CD4-positive, alpha-beta T cell (primary cell): ENCODE measurements at regions of chr4 and their contacts with region 1.

Region 1: GRCh38 chr4:99921174-99921573 is 25.2 kb downstream of the DNAJB14 start:
- DNase-seq: peak in 3 of 14 experiments; percentile 10 to 44 (median 41)
- ATAC-seq: peak; percentile 96
- H3K4me3 ChIP-seq: no peak overlapping the region
- H3K4me3 Mint-ChIP-seq: no peak overlapping the region
- H3K27ac ChIP-seq: no peak overlapping the region
- H3K27ac Mint-ChIP-seq: peak overlapping the region; percentile 59
- H3K4me1 ChIP-seq: peaks cover 1% of the 10 kb centered on the region
- H3K4me1 Mint-ChIP-seq: peaks cover 24% of the 10 kb centered on the region
- H3K27me3 ChIP-seq: no peaks in the 10 kb centered on the region
- H3K27me3 Mint-ChIP-seq: no peaks in the 10 kb centered on the region
- CTCF ChIP-seq: no peak

Region 2: GRCh38 chr4:99934891-99935290 is 13.7 kb after region 1 on chr4:
- CTCF ChIA-PET with region 1: no interaction called
- POLR2A ChIA-PET with region 1: interaction called, 3 read pairs
- intact Hi-C with region 1: loop called (anchors 2 kb)
- DNase-seq: no peak
- ATAC-seq: no peak
- H3K4me3 ChIP-seq: no peak overlapping the region
- H3K4me3 Mint-ChIP-seq: no peak overlapping the region
- H3K27ac ChIP-seq: no peak overlapping the region
- H3K27ac Mint-ChIP-seq: no peak overlapping the region
- H3K4me1 ChIP-seq: no peaks in the 10 kb centered on the region
- H3K4me1 Mint-ChIP-seq: peaks cover 48% of the 10 kb centered on the region
- H3K27me3 ChIP-seq: no peaks in the 10 kb centered on the region
- H3K27me3 Mint-ChIP-seq: no peaks in the 10 kb centered on the region
- CTCF ChIP-seq: no peak